ENCODE measurements at regions of chr7 and their contacts with region 1.

Region 1: GRCh38 chr7:143885951-143886350 is 16.0 kb downstream of the TCAF1 start:
- DNase-seq: no peak
- ATAC-seq: no peak
- H3K4me3 ChIP-seq: no peak overlapping the region
- H3K27ac ChIP-seq: no peak overlapping the region
- H3K4me1 ChIP-seq: peaks cover 4% of the 10 kb centered on the region
- H3K27me3 ChIP-seq: peaks cover 0 to 6% (median 5%) of the 10 kb centered on the region in 3 donors
- CTCF ChIP-seq: no peak

Region 2: GRCh38 chr7:143901668-143902331 is 15.8 kb after region 1 on chr7 and contains the start of gene TCAF1:
- intact Hi-C with region 1: loop called in 1 of 2 experiments (anchors 2 kb)
- DNase-seq: peak; percentile 96 to 97
- ATAC-seq: peak; percentile 98 to 99 (median 99)
- H3K4me3 ChIP-seq: peak within 1 kb of the TSS; percentile 90
- H3K27ac ChIP-seq: peak within 1 kb of the TSS; percentile 88
- H3K4me1 ChIP-seq: peaks cover 10% of the 10 kb centered on the region
- H3K27me3 ChIP-seq: no peaks in the 10 kb centered on the region
- CTCF ChIP-seq: no peak
- total RNA-seq, gene TCAF1: 19.5 to 107 (median 62.1) TPM

Region 3: GRCh38 chr7:143929224-143929920 is 43.4 kb after region 1 on chr7:
- intact Hi-C with region 1: no loop called
- DNase-seq: no peak
- ATAC-seq: peak in 1 of 4 donors; percentile 62
- H3K4me3 ChIP-seq: no peak overlapping the region
- H3K27ac ChIP-seq: no peak overlapping the region
- H3K4me1 ChIP-seq: no peaks in the 10 kb centered on the region
- H3K27me3 ChIP-seq: no peaks in the 10 kb centered on the region
- CTCF ChIP-seq: no peak